Transverse colon (tissue), 4 donors: ENCODE measurements at regions of chr9 and their contacts with region 1.

Region 1: DNA sequence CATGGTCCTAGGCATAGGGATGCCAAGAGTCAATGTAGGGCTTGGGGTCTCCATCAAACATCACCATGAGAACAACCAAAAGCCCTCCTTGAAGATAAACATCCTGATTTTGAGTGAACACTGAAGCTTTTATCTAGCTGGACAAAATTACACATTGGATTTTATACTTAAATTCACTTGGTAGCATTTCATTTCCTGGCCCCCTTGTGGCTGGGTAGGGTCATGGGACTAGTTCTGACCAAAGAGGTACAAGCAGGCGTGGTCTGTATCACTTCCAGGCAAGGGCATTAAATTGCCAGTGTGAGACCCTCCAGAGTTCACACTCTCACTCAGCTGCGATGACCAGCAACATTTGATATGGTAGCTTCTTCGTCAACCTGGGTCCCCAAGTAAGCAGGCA is 320.3 kb downstream of the ACTL7B start:
- DNase-seq: peak; percentile 24
- H3K4me3 ChIP-seq: no peak overlapping the region
- H3K27ac ChIP-seq: no peak overlapping the region
- H3K4me1 ChIP-seq: no peaks in the 10 kb centered on the region
- H3K27me3 ChIP-seq: no peaks in the 10 kb centered on the region
- CTCF ChIP-seq: peak; percentile 33 to 51 (median 41)
- EP300 ChIP-seq: no peak
- POLR2A ChIP-seq: no peak

Region 2: DNA sequence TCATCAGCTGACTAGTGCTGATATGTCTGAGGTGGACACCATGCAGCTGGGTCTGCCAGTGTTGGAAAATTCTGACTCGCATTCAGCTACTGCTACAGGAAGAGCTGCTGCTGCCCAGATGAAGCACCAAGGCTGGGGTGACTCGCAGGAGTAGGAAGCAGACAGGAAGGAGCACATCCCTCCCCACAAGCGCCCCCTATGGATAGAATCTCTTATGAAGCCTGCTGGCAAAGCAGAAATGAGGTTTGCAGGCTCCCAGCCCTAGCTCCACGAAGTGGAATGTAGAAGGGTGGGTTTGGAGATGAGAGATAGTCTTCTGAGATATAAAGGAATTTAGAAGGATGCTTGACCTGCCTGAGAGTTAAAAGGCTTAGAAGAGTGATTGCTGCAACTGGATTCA is 122.8 kb before region 1 on chr9:
- in situ Hi-C with region 1: loop called in 1 of 4 experiments (anchors 25 kb)
- intact Hi-C with region 1: no loop called
- DNase-seq: no peak
- H3K4me3 ChIP-seq: no peak overlapping the region
- H3K27ac ChIP-seq: no peak overlapping the region
- H3K4me1 ChIP-seq: no peaks in the 10 kb centered on the region
- H3K27me3 ChIP-seq: no peaks in the 10 kb centered on the region
- CTCF ChIP-seq: no peak
- EP300 ChIP-seq: no peak
- POLR2A ChIP-seq: no peak